ENCODE measurements at regions of chr6 and their contacts with region 1.

Region 1: GRCh38 chr6:26196846-26197648 is 109.8 kb downstream of the HFE start:
- DNase-seq: peak; percentile 86
- ATAC-seq: peak; percentile 43
- H3K4me3 Mint-ChIP-seq: peak overlapping the region; percentile 98
- H3K27ac Mint-ChIP-seq: peak overlapping the region; percentile 99
- H3K4me1 Mint-ChIP-seq: peaks cover 28% of the 10 kb centered on the region
- H3K27me3 Mint-ChIP-seq: no peaks in the 10 kb centered on the region

Region 2: GRCh38 chr6:26045065-26045927 is 151.8 kb before region 1 on chr6:
- CTCF ChIA-PET with region 1: no interaction called
- POLR2A ChIA-PET with region 1: interaction called, 19 read pairs
- intact Hi-C with region 1: no loop called
- DNase-seq: peak; percentile 83
- ATAC-seq: peak; percentile 63
- H3K4me3 Mint-ChIP-seq: peak overlapping the region; percentile 79
- H3K27ac Mint-ChIP-seq: peak overlapping the region; percentile 99
- H3K4me1 Mint-ChIP-seq: peaks cover 18% of the 10 kb centered on the region
- H3K27me3 Mint-ChIP-seq: no peaks in the 10 kb centered on the region

Region 3: GRCh38 chr6:26129656-26130055 is 67.4 kb before region 1 on chr6:
- CTCF ChIA-PET with region 1: interaction called, 5 read pairs
- POLR2A ChIA-PET with region 1: interaction called, 176 read pairs
- intact Hi-C with region 1: loop called in 1 of 2 experiments (anchors 1 kb)
- DNase-seq: no peak
- ATAC-seq: no peak
- H3K4me3 Mint-ChIP-seq: no peak overlapping the region
- H3K27ac Mint-ChIP-seq: no peak overlapping the region
- H3K4me1 Mint-ChIP-seq: peaks cover 46% of the 10 kb centered on the region
- H3K27me3 Mint-ChIP-seq: no peaks in the 10 kb centered on the region

Region 4: GRCh38 chr6:26223650-26224546 is 26.9 kb after region 1 on chr6:
- CTCF ChIA-PET with region 1: interaction called, 8 read pairs
- POLR2A ChIA-PET with region 1: interaction called, 17 read pairs
- intact Hi-C with region 1: no loop called
- DNase-seq: peak; percentile 79
- ATAC-seq: peak; percentile 86
- H3K4me3 Mint-ChIP-seq: no peak overlapping the region
- H3K27ac Mint-ChIP-seq: no peak overlapping the region
- H3K4me1 Mint-ChIP-seq: peaks cover 8% of the 10 kb centered on the region
- H3K27me3 Mint-ChIP-seq: no peaks in the 10 kb centered on the region

Region 5: GRCh38 chr6:26270903-26271667 is 74.0 kb after region 1 on chr6:
- CTCF ChIA-PET with region 1: no interaction called
- POLR2A ChIA-PET with region 1: interaction called, 65 read pairs
- intact Hi-C with region 1: loop called in 1 of 2 experiments (anchors 1 kb)
- DNase-seq: peak; percentile 85
- ATAC-seq: peak; percentile 43
- H3K4me3 Mint-ChIP-seq: no peak overlapping the region
- H3K27ac Mint-ChIP-seq: no peak overlapping the region
- H3K4me1 Mint-ChIP-seq: peaks cover 23% of the 10 kb centered on the region
- H3K27me3 Mint-ChIP-seq: no peaks in the 10 kb centered on the region

Region 6: GRCh38 chr6:27809939-27810767 is 1613.1 kb after region 1 on chr6:
- CTCF ChIA-PET with region 1: no interaction called
- POLR2A ChIA-PET with region 1: interaction called, 3 read pairs
- intact Hi-C with region 1: loop called in 1 of 2 experiments (anchors 1 kb)
- DNase-seq: peak; percentile 83
- ATAC-seq: peak; percentile 33
- H3K4me3 Mint-ChIP-seq: peak overlapping the region; percentile 86
- H3K27ac Mint-ChIP-seq: peak overlapping the region; percentile 95
- H3K4me1 Mint-ChIP-seq: peaks cover 49% of the 10 kb centered on the region
- H3K27me3 Mint-ChIP-seq: no peaks in the 10 kb centered on the region